ENCODE measurements at regions of chr12 and their contacts with region 1.

Region 1: GRCh38 chr12:57309420-57309819 is 58.4 kb upstream of the STAC3 start:
- DNase-seq: no peak
- ATAC-seq: peak in 1 of 4 donors; percentile 48
- H3K4me3 ChIP-seq: no peak overlapping the region
- H3K27ac ChIP-seq: no peak overlapping the region
- H3K4me1 ChIP-seq: no peaks in the 10 kb centered on the region
- H3K27me3 ChIP-seq: no peaks in the 10 kb centered on the region
- CTCF ChIP-seq: no peak

Region 2: DNA sequence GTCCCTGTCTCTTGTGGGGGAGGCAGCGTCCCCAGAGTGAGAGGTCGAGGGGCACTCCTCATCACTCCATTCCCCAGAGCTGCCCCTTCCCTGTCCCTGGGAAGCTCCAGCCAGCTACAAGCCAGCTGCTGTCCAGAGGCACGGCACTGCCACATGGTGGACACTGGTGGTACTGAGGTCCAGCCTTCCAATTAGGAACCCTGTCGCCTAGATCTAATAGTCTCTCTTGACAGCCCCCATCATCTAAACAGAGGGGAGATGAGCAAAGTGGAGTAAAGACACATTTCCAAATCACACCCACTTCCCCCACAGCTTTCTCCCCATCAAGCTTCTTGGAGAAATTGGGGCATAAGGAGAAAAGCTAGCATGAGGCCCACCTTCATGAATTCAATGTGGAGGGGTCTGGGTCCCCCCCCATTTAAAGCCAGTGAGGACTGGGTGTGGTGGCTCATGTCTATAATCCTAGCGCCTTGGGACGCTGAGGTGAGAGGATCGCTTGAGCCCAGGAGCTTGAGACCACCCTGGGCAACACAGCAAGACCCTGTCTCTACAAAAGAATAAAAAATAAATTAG is 143.6 kb after region 1 on chr12:
- intact Hi-C with region 1: loop called (anchors 5 to 10 kb)
- DNase-seq: peak; percentile 47 to 91 (median 82)
- ATAC-seq: peak; percentile 80 to 93 (median 91)
- H3K4me3 ChIP-seq: no peak overlapping the region
- H3K27ac ChIP-seq: no peak overlapping the region
- H3K4me1 ChIP-seq: no peaks in the 10 kb centered on the region
- H3K27me3 ChIP-seq: no peaks in the 10 kb centered on the region
- CTCF ChIP-seq: peak; percentile 82 to 90 (median 88)

Region 3: DNA sequence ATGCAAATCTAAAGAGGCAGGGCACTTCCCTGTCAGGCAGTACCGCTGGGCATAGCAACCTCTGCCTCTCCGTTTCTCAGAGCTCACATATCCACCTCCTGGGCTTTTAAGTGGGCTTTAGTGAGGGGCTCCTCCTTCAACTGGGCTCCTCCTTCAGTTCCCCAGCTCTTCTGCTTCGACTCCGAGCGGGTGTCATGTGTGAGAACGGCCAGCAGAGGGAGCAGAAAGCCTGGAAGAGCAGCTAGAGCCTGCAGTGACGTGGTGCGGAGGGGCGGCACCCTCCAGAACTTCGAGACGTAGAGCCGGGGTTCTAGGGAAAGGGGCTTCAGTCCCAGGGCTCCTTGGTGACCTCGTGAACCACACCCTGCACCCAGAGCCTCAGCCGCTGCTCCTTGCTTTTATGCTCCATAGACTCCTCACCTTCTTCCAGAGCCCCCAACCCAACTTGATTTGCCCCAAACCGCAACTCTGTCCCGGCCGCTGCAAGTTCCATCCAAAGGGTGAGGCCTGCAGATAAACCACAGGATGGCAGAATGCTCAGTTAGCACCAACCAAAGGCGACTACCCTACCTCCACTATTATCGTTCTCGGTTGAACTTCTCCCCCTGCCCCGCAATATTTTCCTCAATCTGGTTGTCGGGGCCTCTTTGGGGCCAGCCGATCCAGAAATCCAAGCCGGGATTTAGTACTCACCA is 149.8 kb after region 1 on chr12:
- intact Hi-C with region 1: loop called (anchors 5 to 10 kb)
- DNase-seq: peak; percentile 87 to 95 (median 94)
- ATAC-seq: peak; percentile 78 to 89 (median 86)
- H3K4me3 ChIP-seq: peak overlapping the region; percentile 34 to 70 (median 56)
- H3K27ac ChIP-seq: peak overlapping the region in 3 of 4 donors; percentile 37 to 69 (median 50)
- H3K4me1 ChIP-seq: peaks cover 0 to 12% (median 10%) of the 10 kb centered on the region in 3 donors
- H3K27me3 ChIP-seq: no peaks in the 10 kb centered on the region
- CTCF ChIP-seq: peak; percentile 92 to 93 (median 92)